ENCODE measurements at regions of chr10 and their contacts with region 1.

Region 1: GRCh38 chr10:97072851-97073665 is 112.7 kb downstream of the SLIT1 start:
- DNase-seq: peak; percentile 87
- ATAC-seq: peak; percentile 92

Region 2: GRCh38 chr10:97117372-97117771 is 44.3 kb after region 1 on chr10:
- intact Hi-C with region 1: loop called (anchors 2 kb)
- DNase-seq: no peak
- ATAC-seq: peak; percentile 58

Region 3: GRCh38 chr10:97128516-97129154 is 55.6 kb after region 1 on chr10:
- intact Hi-C with region 1: no loop called
- DNase-seq: no peak
- ATAC-seq: no peak

Region 4: DNA sequence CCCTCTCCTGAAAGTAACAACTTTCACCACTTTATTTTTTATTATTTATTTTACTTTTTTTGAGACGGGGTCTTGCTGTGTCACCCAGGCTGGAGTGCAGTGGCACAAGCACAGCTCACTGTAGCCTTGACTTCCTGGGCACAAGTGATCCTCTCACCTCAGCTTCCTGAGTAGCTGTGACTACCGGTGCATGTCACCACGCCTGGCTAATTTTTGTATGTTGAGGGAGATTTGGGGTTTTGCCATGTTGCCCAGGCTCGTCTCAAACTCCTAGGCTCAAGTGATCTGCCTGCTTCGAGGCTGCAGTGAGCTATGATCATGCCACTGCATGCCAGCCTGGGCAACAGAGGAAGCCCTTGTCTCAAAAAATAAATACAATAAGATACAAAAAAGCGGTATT is 127.6 kb after region 1 on chr10:
- intact Hi-C with region 1: loop called (anchors 10 kb)
- DNase-seq: no peak
- ATAC-seq: no peak

Region 5: GRCh38 chr10:98006266-98006665 is 933.2 kb after region 1 on chr10:
- intact Hi-C with region 1: no loop called
- DNase-seq: no peak
- ATAC-seq: no peak

Measured in left ventricle myocardium superior (tissue), 1 donor.